ENCODE measurements at regions of chr9 and their contacts with region 1.

Region 1: GRCh38 chr9:136991993-136992818 is at the start of gene PAXX:
- DNase-seq: peak; percentile 92 to 95
- ATAC-seq: peak; percentile 75 to 91 (median 77)
- H3K4me3 ChIP-seq: peak within 1 kb of the TSS; percentile 81
- H3K4me3 Mint-ChIP-seq: peak within 1 kb of the TSS; percentile 88
- H3K27ac ChIP-seq: peak within 1 kb of the TSS; percentile 96
- H3K27ac Mint-ChIP-seq: peak within 1 kb of the TSS; percentile 92 to 96
- H3K4me1 ChIP-seq: peaks cover 53% of the 10 kb centered on the region
- H3K4me1 Mint-ChIP-seq: peaks cover 15 to 52% of the 10 kb centered on the region in 2 donors
- H3K27me3 ChIP-seq: peaks cover 2% of the 10 kb centered on the region
- H3K27me3 Mint-ChIP-seq: peaks cover 0 to 4% of the 10 kb centered on the region in 2 donors
- CTCF ChIP-seq: no peak
- total RNA-seq, gene PAXX: 161 to 188 (median 161) TPM

Region 2: GRCh38 chr9:136949817-136950655 is 42.2 kb before region 1 on chr9:
- intact Hi-C with region 1: loop called (anchors 2 kb)
- DNase-seq: peak; percentile 97
- ATAC-seq: peak; percentile 95 to 96 (median 95)
- H3K4me3 ChIP-seq: peak overlapping the region; percentile 75
- H3K4me3 Mint-ChIP-seq: peak overlapping the region; percentile 93
- H3K27ac ChIP-seq: peak overlapping the region; percentile 83
- H3K27ac Mint-ChIP-seq: peak overlapping the region; percentile 81 to 92
- H3K4me1 ChIP-seq: peaks cover 50% of the 10 kb centered on the region
- H3K4me1 Mint-ChIP-seq: peaks cover 1 to 34% of the 10 kb centered on the region in 2 donors
- H3K27me3 ChIP-seq: no peaks in the 10 kb centered on the region
- H3K27me3 Mint-ChIP-seq: no peaks in the 10 kb centered on the region
- CTCF ChIP-seq: peak; percentile 28

Region 3: DNA sequence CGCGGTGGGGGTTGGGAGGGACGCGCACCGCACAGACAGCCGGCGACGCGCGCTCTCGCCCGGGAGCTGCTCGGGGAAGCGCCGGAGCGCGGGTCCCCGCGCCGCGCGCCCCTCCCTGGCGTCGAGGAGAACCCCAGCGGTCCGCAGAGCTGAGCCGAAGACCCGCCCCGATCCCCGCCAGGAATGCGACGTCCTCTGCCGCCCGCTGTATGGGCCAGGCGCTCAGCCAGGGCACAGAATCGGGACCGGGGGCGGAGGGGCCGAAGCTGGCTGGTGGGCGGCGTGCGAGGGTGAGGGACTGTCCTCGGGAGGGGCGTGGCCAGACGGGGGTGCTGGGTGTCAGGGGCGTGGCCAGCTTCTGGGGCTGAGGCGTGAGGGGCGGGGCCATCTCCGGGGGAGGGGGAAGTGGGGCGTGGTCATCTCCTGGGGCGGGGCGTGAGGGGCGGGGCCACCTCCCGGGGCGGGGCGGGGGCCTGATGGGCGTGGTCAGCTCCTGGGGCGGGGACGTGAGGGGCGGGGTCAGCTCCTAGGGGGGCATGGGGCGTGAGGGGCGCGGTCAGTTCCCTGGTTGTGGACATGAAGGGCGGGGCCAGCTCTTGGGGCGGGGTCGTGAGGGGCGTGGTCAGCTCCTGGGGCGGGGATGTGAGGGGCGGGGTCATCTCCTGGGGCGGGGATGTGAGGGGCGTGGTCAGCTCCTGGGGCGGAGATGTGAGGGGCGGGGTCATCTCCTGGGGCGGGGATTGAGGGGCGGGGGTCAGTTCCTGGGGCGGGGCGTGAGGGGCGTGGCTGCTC is 13.9 kb before region 1 on chr9:
- intact Hi-C with region 1: loop called (anchors 1 kb)
- DNase-seq: peak; percentile 82 to 88
- ATAC-seq: peak; percentile 80 to 88 (median 84)
- H3K4me3 ChIP-seq: peak overlapping the region; percentile 44
- H3K4me3 Mint-ChIP-seq: peak overlapping the region; percentile 78
- H3K27ac ChIP-seq: peak overlapping the region; percentile 30
- H3K27ac Mint-ChIP-seq: peak overlapping the region in 1 of 2 donors; percentile 78
- H3K4me1 ChIP-seq: peaks cover 54% of the 10 kb centered on the region
- H3K4me1 Mint-ChIP-seq: peaks cover 6 to 39% of the 10 kb centered on the region in 2 donors
- H3K27me3 ChIP-seq: no peaks in the 10 kb centered on the region
- H3K27me3 Mint-ChIP-seq: no peaks in the 10 kb centered on the region
- CTCF ChIP-seq: no peak